MCF 10A (cell line): ENCODE measurements at regions of chr6 and their contacts with region 1.

Region 1: GRCh38 chr6:87789198-87789899 is 87.3 kb upstream of the AKIRIN2 start:
- DNase-seq: peak; percentile 92
- H3K4me3 Mint-ChIP-seq: no peak overlapping the region
- H3K27ac Mint-ChIP-seq: peak overlapping the region; percentile 40
- H3K4me1 Mint-ChIP-seq: peaks cover 18% of the 10 kb centered on the region
- H3K27me3 Mint-ChIP-seq: no peaks in the 10 kb centered on the region
- CTCF ChIP-seq: no peak

Region 2: GRCh38 chr6:87731818-87732661 is 57.3 kb before region 1 on chr6:
- CTCF ChIA-PET with region 1: interaction called, 3 read pairs
- POLR2A ChIA-PET with region 1: interaction called, 7 read pairs
- intact Hi-C with region 1: loop called (anchors 1 kb)
- DNase-seq: peak; percentile 99
- H3K4me3 Mint-ChIP-seq: peak overlapping the region; percentile 21
- H3K27ac Mint-ChIP-seq: peak overlapping the region; percentile 90
- H3K4me1 Mint-ChIP-seq: peaks cover 42% of the 10 kb centered on the region
- H3K27me3 Mint-ChIP-seq: no peaks in the 10 kb centered on the region
- CTCF ChIP-seq: no peak

Region 3: GRCh38 chr6:87756858-87757257 is 32.5 kb before region 1 on chr6:
- CTCF ChIA-PET with region 1: no interaction called
- POLR2A ChIA-PET with region 1: interaction called, 3 read pairs
- intact Hi-C with region 1: loop called (anchors 2 kb)
- DNase-seq: peak; percentile 73
- H3K4me3 Mint-ChIP-seq: no peak overlapping the region
- H3K27ac Mint-ChIP-seq: no peak overlapping the region
- H3K4me1 Mint-ChIP-seq: peaks cover 6% of the 10 kb centered on the region
- H3K27me3 Mint-ChIP-seq: no peaks in the 10 kb centered on the region
- CTCF ChIP-seq: no peak